HAP-1 (cell line): ENCODE measurements at regions of chr3 and their contacts with region 1.

Region 1: GRCh38 chr3:169676925-169677537 is 13.5 kb upstream of the MECOM start:
- DNase-seq: no peak
- H3K4me3 ChIP-seq: no peak overlapping the region
- H3K4me1 ChIP-seq: no peaks in the 10 kb centered on the region
- H3K27me3 ChIP-seq: peaks cover 3% of the 10 kb centered on the region

Region 2: GRCh38 chr3:168878655-168879054 is 798.4 kb before region 1 on chr3:
- in situ Hi-C with region 1: loop called (anchors 10 kb)
- DNase-seq: no peak
- H3K4me3 ChIP-seq: no peak overlapping the region
- H3K4me1 ChIP-seq: peaks cover 10% of the 10 kb centered on the region
- H3K27me3 ChIP-seq: no peaks in the 10 kb centered on the region

Region 3: DNA sequence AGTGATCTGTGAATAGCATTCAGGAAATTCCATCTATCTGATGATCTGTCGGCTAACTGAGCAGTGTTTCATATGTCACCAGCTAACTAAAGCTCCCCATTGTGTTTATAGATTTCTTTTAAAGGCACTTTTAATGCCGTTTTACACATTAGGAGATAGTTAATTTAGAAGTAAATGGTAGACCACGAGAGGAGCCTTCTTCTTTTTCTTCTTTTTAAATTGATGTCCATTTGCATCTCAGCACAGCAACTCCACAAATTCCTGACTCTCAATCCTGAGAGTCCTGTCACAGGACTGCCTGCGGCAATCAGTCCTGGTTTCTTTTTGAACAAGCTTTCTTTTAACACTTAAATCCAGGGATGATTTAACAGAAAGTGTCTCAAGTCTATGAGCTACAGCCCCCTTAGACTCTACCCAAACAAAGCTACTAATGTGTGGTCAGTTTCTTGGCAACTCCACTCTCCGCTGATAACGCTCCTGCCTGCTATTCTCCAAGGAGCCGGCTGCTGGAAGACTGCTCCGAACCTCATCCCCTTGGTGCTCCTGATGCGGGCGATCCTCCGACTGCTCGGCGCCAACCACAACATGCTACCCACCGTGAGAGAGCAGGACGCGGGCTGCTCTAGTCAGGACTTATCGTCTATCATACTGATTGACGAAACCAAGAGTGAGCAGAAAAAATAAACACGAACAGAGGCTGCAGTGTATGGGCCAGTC is 434.9 kb before region 1 on chr3:
- in situ Hi-C with region 1: no loop called
- DNase-seq: peak; percentile 68 to 76
- H3K4me3 ChIP-seq: peak overlapping the region; percentile 12
- H3K4me1 ChIP-seq: peaks cover 35% of the 10 kb centered on the region
- H3K27me3 ChIP-seq: no peaks in the 10 kb centered on the region